ENCODE measurements at regions of chr10 and their contacts with region 1.

Region 1: DNA sequence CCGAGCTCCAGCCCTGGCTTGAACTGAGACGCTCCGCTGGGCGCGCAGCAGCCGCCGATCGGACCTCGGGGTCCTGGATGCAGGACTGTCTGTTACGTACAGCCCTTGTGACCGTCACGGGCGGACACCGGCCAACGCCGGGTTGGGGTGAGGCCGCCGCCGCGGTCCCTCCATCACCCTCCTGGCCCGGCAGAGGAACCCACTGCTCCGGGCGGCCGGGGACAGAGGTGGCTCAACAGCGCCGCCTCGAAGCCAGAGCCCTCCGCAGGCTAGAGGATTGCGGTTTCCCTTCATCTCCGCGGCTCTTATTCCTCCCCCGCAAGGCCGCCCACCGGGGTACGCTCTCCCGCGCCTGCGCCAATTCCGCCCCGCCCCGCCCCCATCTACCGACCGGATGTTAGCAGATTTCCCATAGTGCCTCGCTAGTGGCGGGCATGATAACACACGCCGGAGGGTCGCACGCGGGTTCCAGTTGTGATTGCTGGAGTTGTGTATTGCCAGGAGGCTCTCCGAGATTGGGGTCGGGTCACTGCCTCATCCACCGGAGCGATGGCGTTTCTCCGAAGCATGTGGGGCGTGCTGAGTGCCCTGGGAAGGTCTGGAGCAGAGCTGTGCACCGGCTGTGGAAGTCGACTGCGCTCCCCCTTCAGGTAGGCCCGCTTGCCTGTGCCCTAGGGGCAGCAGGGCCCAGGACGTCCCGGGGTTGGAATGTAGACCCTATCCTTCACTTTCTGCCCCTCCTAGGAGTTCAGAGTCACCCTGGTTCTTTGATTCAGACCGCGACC is at the start of gene TFAM:
- DNase-seq: peak; percentile 67
- H3K4me3 ChIP-seq: peak within 1 kb of the TSS; percentile 94
- CTCF ChIP-seq: peak; percentile 80

Region 2: GRCh38 chr10:58350619-58351323 is 34.4 kb before region 1 on chr10:
- CTCF ChIA-PET with region 1: interaction called, 10 read pairs
- POLR2A ChIA-PET with region 1: no interaction called
- DNase-seq: no peak
- H3K4me3 ChIP-seq: no peak overlapping the region
- CTCF ChIP-seq: no peak

Region 3: GRCh38 chr10:58372607-58373441 is 12.4 kb before region 1 on chr10:
- CTCF ChIA-PET with region 1: interaction called, 15 read pairs
- POLR2A ChIA-PET with region 1: no interaction called
- DNase-seq: no peak
- H3K4me3 ChIP-seq: no peak overlapping the region
- CTCF ChIP-seq: no peak

Region 4: GRCh38 chr10:58511765-58512490 is 126.7 kb after region 1 on chr10:
- CTCF ChIA-PET with region 1: no interaction called
- POLR2A ChIA-PET with region 1: no interaction called
- DNase-seq: no peak
- H3K4me3 ChIP-seq: peak overlapping the region; percentile 67
- CTCF ChIP-seq: no peak

Measured in AG04449 (cell line).